Left cardiac atrium (tissue), 4 donors: ENCODE measurements at regions of chr15 and their contacts with region 1.

Region 1: GRCh38 chr15:66946578-66947164 is 118.7 kb upstream of the SMAD3 start:
- DNase-seq: peak; percentile 55
- ATAC-seq: peak; percentile 62 to 69

Region 2: GRCh38 chr15:67120839-67121643 is 174.4 kb after region 1 on chr15:
- intact Hi-C with region 1: no loop called
- DNase-seq: peak; percentile 96
- ATAC-seq: peak; percentile 85 to 91

Region 3: DNA sequence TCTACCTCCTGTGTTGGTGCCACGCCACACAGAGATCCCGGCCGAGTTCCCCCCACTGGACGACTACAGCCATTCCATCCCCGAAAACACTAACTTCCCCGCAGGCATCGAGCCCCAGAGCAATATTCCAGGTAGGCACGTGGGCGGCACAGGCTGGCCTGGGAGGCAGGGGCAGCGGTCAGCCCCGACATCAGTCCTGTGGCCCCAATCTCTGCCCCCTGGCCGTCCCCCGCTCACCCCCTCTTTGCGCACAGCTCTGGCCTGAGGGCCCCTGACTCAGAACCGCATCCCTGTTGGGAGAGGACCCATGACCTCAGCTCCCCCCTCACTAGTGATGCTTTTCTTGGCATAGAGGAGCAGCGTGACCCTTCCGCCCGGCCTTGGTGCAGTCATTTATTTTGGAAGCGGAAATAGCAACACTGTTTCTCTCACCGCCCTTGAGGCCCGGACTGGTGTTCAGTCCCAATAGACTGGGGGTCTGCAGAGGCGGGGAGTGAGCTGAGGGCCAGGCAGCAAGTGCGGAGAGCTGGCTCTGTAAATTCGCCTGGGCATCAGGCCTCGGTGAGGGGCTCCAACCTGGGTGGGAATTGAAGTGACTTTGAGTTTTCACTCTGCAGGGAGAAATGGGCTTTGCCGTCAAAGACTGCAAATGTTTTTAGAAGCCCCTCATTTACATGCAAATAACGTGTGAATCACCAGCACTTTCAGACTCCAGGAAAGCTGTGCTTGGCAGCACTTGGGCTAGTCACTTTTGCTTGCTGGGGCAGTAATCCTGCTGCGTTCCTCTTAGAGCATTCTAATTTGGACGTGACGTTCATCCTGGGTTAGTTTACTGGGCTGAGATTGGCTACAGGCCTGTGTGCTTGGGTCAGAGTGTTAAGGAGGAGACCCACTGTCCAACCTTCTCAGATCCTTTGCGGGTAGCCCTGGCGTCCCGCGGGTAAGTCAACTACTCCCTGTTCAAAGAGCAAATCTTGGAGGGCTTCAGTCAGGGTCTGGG is 218.9 kb after region 1 on chr15:
- intact Hi-C with region 1: loop called in 1 of 2 experiments (anchors 10 kb)
- DNase-seq: peak; percentile 79
- ATAC-seq: peak; percentile 60 to 84

Region 4: GRCh38 chr15:67303490-67304363 is 357.1 kb after region 1 on chr15:
- intact Hi-C with region 1: loop called (anchors 1 to 2 kb)
- DNase-seq: no peak
- ATAC-seq: no peak

Region 5: DNA sequence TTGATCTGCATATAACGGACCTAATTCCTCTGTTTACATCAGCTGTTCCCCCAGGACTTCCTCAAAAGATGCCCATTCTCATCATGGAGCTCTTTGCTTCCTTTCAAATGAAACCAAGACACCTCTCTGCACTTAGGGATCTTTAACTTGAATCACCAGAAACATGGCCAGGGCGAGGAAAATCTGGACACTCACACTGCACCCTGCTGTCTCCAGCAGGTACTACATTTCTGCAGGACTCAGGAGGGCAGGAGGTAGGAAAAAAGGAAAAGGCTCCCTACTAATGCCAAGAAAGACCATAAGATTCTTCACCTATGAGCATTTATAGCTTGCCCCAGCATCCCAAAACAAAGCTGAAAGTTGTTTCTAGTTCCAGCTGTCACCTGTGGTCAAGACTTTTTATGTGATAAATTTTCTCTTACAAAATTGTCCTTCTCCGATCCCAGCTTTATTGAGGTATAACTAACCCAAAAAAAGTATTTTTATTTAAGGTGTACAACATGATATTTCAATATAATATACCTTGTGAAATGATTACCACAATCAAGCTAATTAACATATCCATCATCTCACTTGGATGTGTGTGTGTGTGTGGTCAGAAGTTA is 486.9 kb after region 1 on chr15:
- intact Hi-C with region 1: loop called (anchors 5 to 10 kb)
- DNase-seq: peak; percentile 42
- ATAC-seq: peak in 1 of 2 donors; percentile 80